ENCODE measurements at regions of chr10 and their contacts with region 1.

Region 1: DNA sequence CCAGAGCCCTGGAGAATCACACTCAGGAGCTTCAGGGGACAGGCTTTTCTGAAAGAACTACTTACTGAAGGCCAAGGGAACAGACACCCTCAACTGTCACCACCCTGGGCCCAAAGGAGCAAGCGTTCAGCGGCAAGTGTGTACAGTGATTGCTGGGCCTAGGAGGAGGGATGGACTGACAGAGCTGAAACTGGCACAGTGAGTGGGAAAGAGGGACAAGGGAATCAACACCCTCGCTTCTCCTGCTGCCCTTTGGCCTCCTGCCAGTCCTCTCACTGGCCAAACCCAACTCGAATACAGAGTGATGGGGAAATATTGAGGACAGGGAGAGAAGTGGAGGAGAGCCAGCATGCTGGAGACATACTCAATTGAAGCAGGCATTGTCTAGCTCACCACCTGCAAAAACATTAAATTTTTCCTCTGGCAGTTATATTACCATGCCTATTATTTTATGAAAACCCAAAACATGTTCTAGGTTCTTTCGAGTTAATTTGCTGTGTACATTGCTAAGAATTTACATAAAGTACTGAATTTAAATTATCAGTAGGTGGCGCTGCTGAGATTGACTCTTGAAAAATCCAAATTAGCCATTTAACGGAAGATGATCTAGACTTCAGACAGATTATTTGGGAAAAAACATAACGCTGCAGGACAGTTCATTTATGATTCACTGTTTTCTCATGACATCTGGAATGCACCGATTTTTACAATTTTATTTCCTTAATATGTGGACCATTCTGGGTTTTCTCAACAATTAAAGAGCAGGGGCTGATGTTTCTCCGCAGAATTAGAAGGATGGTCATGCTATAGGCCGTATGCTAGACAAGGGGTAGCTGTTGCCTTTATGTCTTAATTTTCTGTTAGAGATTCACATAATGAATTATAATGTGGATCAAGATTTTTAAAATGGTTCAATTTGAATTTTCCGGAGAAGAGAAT is 14.7 kb upstream of the TMEM236 start:
- DNase-seq: no peak
- H3K4me3 ChIP-seq: no peak overlapping the region
- CTCF ChIP-seq: peak; percentile 26

Region 2: GRCh38 chr10:17607603-17608332 is 129.5 kb before region 1 on chr10:
- CTCF ChIA-PET with region 1: interaction called, 46 read pairs
- POLR2A ChIA-PET with region 1: interaction called, 3 read pairs
- DNase-seq: no peak
- H3K4me3 ChIP-seq: no peak overlapping the region
- CTCF ChIP-seq: peak; percentile 62

Region 3: GRCh38 chr10:17712717-17713471 is 24.4 kb before region 1 on chr10:
- CTCF ChIA-PET with region 1: interaction called, 11 read pairs
- POLR2A ChIA-PET with region 1: no interaction called
- DNase-seq: no peak
- H3K4me3 ChIP-seq: no peak overlapping the region
- CTCF ChIP-seq: no peak

Region 4: DNA sequence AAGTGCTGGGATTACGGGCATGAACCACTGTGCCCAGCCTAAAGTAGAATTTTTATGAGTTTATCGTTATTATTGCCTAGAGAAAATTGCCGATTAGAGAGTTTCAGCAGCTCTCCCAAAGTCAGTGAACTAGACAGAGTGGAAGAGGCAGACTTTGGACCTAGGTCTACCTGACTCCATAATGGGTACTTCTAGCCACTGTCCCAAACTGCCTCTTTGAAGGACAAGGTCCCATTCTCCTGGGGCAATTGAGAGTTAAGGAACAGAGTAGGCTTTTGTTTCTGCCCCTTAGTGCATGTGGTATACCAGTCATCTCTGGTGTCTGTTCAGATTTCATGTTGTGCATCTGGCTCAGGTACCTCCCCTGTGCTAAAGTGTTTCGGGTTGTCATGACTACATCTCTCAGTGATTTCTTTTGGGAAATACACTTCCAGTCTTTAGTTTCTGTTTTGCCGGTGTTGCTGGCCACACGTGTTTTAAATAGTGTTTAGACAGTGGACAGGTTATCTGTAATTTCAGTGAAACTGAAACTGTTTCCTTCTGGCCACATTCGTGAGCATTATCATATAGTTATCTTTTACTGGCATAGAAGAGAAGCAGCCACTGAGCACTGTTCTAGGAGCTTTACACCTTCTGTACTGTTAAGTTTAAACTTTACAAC is 19.4 kb after region 1 on chr10:
- CTCF ChIA-PET with region 1: interaction called, 10 read pairs
- POLR2A ChIA-PET with region 1: no interaction called
- DNase-seq: no peak
- H3K4me3 ChIP-seq: no peak overlapping the region
- CTCF ChIP-seq: no peak

Region 5: DNA sequence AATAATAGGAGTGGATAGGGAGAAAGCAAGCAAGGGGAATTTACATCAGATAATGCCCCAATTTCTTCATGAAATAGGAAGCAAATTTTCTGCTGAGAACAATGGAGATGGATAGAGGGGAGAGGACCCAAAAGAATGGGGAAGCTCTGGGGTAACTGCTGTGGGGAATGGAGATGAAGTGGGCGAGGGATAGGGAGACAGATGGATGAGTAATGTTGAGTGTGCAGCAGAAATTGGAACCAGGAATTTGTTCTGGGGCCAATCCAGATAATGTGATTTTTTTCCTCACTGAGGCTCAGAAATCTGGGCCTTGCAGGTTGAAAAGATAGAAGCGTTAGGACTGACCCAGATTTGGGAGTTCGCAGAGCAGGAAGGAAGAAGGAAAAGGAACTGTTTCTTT is 47.4 kb after region 1 on chr10:
- CTCF ChIA-PET with region 1: interaction called, 11 read pairs
- POLR2A ChIA-PET with region 1: no interaction called
- DNase-seq: no peak
- H3K4me3 ChIP-seq: no peak overlapping the region
- CTCF ChIP-seq: no peak